ENCODE measurements at regions of chr20 and their contacts with region 1.

Region 1: GRCh38 chr20:3470627-3471396 is at the start of gene ATRN:
- DNase-seq: peak; percentile 88 to 92
- H3K4me3 ChIP-seq: peak within 1 kb of the TSS; percentile 90 to 92
- H3K27ac ChIP-seq: peak within 1 kb of the TSS; percentile 79 to 89
- H3K4me1 ChIP-seq: peaks cover 0 to 27% (median 26%) of the 10 kb centered on the region in 4 donors
- H3K27me3 ChIP-seq: no peaks in the 10 kb centered on the region
- CTCF ChIP-seq: no peak

Region 2: GRCh38 chr20:3407771-3408637 is 62.8 kb before region 1 on chr20:
- intact Hi-C with region 1: loop called (anchors 5 kb)
- DNase-seq: peak; percentile 68 to 85
- H3K4me3 ChIP-seq: peak overlapping the region; percentile 74 to 99
- H3K27ac ChIP-seq: peak overlapping the region; percentile 90 to 98
- H3K4me1 ChIP-seq: peaks cover 0 to 27% (median 17%) of the 10 kb centered on the region in 4 donors
- H3K27me3 ChIP-seq: no peaks in the 10 kb centered on the region
- CTCF ChIP-seq: no peak

Measured in tibial artery (tissue), 4 donors.